Activated T-helper 1 cell treated with anti-CD3 and anti-CD28 coated beads, Interleukin-12 subunit alpha, Interleukin-12 subunit beta, Interleukin-2, Interleukin-4 antibody, amounts not matched to agents 30 ng/mL and 10 ng/mL and 1 ng/mL, durations not matched to agents 14 hours and 24 hours and 36 hours (primary cell): ENCODE measurements at regions of chr12 and their contacts with region 1.

Region 1: DNA sequence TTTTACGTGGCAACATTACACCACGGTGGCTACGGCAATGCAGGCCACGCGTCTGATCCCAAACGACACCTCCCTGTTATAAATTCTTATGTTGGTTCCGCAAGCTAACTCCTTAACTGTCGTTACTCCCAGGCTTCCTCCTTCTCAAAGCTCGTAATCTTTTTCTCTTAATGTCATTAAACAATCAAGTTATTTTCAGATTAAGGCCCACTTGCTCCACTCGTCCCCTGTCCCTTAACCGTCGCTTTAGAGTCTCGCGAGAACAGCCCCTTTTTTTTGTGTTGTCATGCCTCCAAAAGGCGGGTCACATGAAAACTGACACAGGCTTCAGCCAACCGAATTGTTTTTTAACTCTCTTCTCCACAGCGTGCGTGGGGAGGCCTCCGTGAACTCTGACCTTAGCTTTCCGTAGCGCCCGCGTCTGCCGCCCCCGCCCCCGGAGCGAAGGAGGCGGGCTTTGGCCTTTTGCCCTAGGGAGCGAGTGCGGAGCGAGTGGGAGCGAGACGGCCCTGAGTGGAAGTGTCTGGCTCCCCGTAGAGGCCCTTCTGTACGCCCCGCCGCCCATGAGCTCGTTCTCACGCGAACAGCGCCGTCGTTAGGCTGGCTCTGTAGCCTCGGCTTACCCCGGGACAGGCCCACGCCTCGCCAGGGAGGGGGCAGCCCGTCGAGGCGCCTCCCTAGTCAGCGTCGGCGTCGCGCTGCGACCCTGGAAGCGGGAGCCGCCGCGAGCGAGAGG is at the start of gene CAND1:
- DNase-seq: peak; percentile 94
- H3K4me3 Mint-ChIP-seq: peak within 1 kb of the TSS; percentile 92
- H3K27ac Mint-ChIP-seq: peak within 1 kb of the TSS; percentile 99
- H3K4me1 Mint-ChIP-seq: peaks cover 39% of the 10 kb centered on the region
- H3K27me3 Mint-ChIP-seq: no peaks in the 10 kb centered on the region
- total RNA-seq, gene CAND1: 185 and 209 TPM in 2 replicates

Region 2: DNA sequence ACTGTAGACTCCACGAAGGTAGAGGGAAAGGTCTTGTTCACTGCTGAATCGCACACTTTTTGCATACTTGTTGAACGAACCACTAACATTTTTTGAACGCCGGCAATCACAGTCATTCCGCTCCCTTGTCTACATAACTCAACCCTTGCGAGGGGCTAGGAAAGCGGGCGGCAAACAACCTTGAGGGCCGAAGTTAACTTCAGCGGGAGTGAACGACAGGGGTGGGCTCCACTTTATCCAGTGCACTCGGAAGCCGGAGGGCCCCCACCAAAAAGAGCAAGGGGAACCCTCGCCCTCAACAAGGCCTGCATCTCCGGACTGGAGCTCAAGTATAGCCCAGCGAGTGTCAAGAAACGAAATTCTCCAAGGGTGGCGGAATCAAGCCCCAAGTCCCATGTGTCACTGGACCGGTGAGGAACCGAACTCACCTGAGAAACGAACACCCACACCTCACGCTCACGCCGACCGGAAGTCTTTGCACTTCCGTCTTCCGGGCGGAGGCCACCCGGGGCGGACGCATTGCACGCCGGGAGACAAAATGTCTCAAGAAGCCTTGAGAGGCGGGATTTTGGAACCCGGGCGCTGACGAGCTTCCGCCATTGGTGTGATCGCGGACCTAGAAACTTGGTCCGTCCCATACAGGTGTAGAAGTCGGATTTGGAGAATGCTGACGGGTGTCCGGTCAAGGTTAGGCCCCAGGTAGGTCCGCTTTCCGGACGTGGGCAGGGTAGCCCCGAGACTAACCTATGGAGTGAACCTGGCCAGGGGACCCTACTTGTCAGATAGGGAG is 1138.6 kb before region 1 on chr12 and contains the start of gene LLPH:
- intact Hi-C with region 1: loop called (anchors 2 kb)
- DNase-seq: peak; percentile 86
- H3K4me3 Mint-ChIP-seq: peak within 1 kb of the TSS; percentile 98
- H3K27ac Mint-ChIP-seq: peak within 1 kb of the TSS; percentile 93
- H3K4me1 Mint-ChIP-seq: peaks cover 57% of the 10 kb centered on the region
- H3K27me3 Mint-ChIP-seq: no peaks in the 10 kb centered on the region
- total RNA-seq, gene LLPH: 31.3 and 33.6 TPM in 2 replicates

Region 3: GRCh38 chr12:67096533-67097318 is 172.3 kb before region 1 on chr12:
- intact Hi-C with region 1: no loop called
- DNase-seq: no peak
- H3K4me3 Mint-ChIP-seq: no peak overlapping the region
- H3K27ac Mint-ChIP-seq: no peak overlapping the region
- H3K4me1 Mint-ChIP-seq: no peaks in the 10 kb centered on the region
- H3K27me3 Mint-ChIP-seq: peaks cover 2% of the 10 kb centered on the region

Region 4: DNA sequence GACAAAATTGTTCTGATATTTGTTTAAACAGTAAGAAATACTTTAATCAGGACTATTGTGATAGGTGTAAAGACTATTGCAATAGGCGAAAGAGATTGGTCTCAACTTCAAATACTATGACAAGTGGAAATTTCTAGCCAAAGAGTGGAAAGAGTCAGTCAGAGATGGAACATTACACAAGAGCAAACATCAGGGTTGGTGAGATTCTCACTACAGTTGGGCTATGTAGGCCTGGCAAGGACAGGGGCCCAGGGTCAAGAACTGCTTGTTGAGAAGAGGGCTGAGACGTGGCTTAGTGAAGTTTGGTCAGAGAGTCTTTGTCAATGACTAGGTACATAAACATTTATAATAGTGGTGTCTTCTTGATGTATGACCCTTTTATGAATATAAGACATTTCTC is 19.5 kb after region 1 on chr12:
- intact Hi-C with region 1: loop called (anchors 1 kb)
- DNase-seq: no peak
- H3K4me3 Mint-ChIP-seq: no peak overlapping the region
- H3K27ac Mint-ChIP-seq: peak overlapping the region; percentile 62
- H3K4me1 Mint-ChIP-seq: peaks cover 46% of the 10 kb centered on the region
- H3K27me3 Mint-ChIP-seq: no peaks in the 10 kb centered on the region

Region 5: GRCh38 chr12:67943226-67943892 is 674.3 kb after region 1 on chr12:
- intact Hi-C with region 1: loop called (anchors 5 kb)
- DNase-seq: peak; percentile 27
- H3K4me3 Mint-ChIP-seq: no peak overlapping the region
- H3K27ac Mint-ChIP-seq: no peak overlapping the region
- H3K4me1 Mint-ChIP-seq: peaks cover 5% of the 10 kb centered on the region
- H3K27me3 Mint-ChIP-seq: peaks cover 6% of the 10 kb centered on the region

Region 6: GRCh38 chr12:69239352-69239921 is 1970.4 kb after region 1 on chr12 and contains the start of gene CPSF6:
- intact Hi-C with region 1: loop called (anchors 10 kb)
- DNase-seq: peak; percentile 94
- H3K4me3 Mint-ChIP-seq: peak within 1 kb of the TSS; percentile 100
- H3K27ac Mint-ChIP-seq: peak within 1 kb of the TSS; percentile 99
- H3K4me1 Mint-ChIP-seq: peaks cover 47% of the 10 kb centered on the region
- H3K27me3 Mint-ChIP-seq: peaks cover 7% of the 10 kb centered on the region
- total RNA-seq, gene CPSF6: 114 and 115 TPM in 2 replicates